ENCODE measurements at regions of chr1 and their contacts with region 1.

Region 1: DNA sequence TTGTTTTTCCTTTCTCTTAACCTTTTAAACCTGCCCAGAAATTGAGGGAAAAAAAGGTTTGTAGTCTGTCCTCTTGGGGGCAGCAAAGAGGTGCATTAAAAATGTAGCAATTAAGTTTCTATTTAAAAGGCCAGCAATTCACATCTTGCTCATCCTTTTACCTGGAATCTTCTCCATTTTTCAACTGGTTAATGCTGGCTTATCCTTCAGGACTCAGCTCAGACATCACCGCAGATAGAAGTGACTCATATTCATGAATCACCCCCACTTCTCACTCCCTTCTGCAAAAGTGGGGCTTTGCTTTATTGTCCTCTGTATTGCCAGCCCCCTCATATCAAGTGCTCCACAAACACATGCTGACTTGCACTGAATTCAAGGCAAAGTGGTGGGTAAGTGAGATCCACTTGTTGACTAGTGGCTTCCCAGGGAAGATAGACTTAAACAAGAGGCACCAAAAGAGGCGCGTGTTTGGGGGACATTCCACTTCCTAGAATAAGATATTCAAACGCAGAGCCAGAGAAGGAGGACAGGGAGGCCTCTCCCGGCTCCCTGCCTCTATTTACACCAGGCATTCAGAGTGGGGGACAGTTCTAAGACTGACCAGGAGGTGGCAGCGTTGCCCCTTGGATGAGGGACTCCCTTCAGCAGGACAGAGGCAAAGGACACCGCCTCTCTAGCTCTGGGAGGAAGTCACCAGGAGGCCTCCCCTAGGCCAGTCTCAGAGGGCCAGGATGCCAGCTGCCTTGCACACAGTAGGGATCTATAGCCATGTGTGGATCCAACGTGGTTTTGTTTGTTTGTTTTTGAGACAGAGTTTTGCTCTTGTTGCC is 23.2 kb upstream of the ZNF648 start:
- DNase-seq: peak in 1 of 2 donors; percentile 96
- H3K4me3 ChIP-seq: no peak overlapping the region
- H3K27ac ChIP-seq: peak overlapping the region; percentile 28
- H3K4me1 ChIP-seq: peaks cover 43% of the 10 kb centered on the region
- H3K27me3 ChIP-seq: no peaks in the 10 kb centered on the region
- CTCF ChIP-seq: peak in 2 of 3 experiments; percentile 90 to 98
- POLR2A ChIP-seq: no peak

Region 2: DNA sequence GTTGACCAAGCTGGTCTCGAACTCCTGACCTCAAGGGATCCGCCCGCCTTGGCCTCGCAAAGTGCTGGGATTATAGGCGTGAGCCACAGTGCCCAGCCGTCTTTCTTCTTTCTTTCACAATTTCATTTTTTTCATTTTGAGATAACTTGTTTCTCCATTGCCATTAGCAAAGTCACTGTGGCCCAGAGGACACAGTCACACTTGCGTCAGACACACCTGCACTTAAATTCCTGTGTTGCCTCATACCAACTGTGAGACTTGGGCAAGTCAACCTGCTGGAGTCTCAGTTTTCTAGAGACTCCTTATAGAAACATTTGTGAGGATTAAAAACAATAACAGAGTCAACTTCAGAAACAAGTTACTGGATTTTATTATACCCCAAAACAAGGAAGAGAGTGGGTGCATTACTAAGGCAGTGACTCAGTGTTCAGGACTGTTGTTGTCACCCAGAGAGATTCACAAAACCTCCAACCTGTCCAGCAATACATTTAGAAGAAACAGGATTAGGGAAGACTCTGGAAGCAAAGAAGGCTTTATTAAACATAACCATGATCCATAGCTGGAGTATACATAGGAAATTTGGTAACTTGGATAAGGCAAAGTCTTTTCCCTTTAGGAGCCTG is 313.2 kb after region 1 on chr1:
- intact Hi-C with region 1: loop called (anchors 5 kb)
- DNase-seq: no peak
- H3K4me3 ChIP-seq: no peak overlapping the region
- H3K27ac ChIP-seq: peak overlapping the region; percentile 70
- H3K4me1 ChIP-seq: peaks cover 18% of the 10 kb centered on the region
- H3K27me3 ChIP-seq: no peaks in the 10 kb centered on the region
- CTCF ChIP-seq: no peak
- POLR2A ChIP-seq: no peak

Measured in vagina (tissue), 2 donors.